MCF 10A (cell line): ENCODE measurements at regions of chr2 and their contacts with region 1.

Region 1: DNA sequence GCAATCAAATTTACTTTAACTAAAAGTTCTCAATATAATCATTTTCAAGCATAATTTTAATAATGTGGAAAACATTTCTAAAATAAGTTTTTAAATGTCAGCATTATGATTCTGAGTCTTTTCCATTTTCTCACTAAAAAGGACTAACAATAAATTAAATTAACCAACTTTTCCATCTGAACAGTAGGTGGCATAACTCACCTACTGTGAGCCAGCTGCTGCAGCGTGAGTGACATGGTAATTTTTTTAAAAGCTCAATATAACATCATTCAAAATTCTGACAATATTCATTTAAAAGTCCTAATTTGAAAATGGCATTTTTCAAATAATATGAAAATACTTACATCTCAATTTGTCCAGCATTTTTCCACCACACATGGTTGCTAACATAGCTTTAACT is 66.5 kb downstream of the DTNB start:
- DNase-seq: peak; percentile 57
- H3K4me3 Mint-ChIP-seq: no peak overlapping the region
- H3K27ac Mint-ChIP-seq: no peak overlapping the region
- H3K4me1 Mint-ChIP-seq: no peaks in the 10 kb centered on the region
- H3K27me3 Mint-ChIP-seq: no peaks in the 10 kb centered on the region
- CTCF ChIP-seq: peak; percentile 71

Region 2: DNA sequence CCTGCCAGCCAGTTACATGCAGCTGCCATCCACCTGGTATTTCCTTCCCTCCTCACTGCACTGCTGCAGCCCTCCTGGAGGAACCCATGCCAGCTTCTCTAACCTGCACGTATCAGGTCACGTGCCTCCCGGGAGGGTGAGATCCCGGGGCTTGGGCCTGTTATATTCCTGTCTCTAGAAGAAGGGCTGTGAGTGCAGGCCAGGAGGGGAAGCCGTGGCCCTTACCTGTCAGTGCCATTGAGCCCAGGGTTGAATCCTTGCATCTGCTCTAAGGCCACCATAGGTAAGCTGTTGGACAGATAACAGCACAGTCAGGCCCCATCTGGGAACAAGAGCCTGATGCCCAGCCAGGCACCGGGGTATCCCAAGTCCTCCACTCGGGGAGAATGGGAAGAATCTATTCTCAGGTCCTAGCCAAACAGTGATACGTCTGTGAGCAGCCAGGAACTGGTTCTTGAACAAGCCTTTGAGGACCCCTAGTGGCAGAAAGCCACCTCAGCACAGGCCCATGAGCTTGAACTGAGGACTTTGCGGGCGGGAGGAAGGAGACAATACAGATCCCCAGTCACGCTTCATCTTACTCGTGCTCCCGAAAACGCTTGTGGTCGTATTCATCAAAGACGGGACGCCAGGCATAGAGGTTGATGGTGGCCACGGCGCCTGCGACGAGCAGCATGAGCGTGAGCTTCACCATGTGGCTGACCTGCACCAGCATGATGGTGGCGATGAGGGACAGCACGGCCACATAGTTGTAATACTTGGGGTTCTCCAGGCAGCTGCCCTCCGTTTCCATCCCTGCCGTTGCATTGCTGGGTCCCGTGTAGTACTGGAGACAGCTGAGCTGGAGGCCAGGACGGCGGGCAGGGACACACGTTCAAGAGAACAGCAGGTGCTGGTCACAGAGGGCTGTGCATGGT is 779.3 kb before region 1 on chr2:
- CTCF ChIA-PET with region 1: no interaction called
- POLR2A ChIA-PET with region 1: no interaction called
- intact Hi-C with region 1: no loop called
- DNase-seq: peak; percentile 73
- H3K4me3 Mint-ChIP-seq: no peak overlapping the region
- H3K27ac Mint-ChIP-seq: no peak overlapping the region
- H3K4me1 Mint-ChIP-seq: no peaks in the 10 kb centered on the region
- H3K27me3 Mint-ChIP-seq: no peaks in the 10 kb centered on the region
- CTCF ChIP-seq: peak; percentile 58

Region 3: GRCh38 chr2:25056098-25056821 is 550.6 kb before region 1 on chr2:
- CTCF ChIA-PET with region 1: no interaction called
- POLR2A ChIA-PET with region 1: no interaction called
- intact Hi-C with region 1: no loop called
- DNase-seq: no peak
- H3K4me3 Mint-ChIP-seq: no peak overlapping the region
- H3K27ac Mint-ChIP-seq: no peak overlapping the region
- H3K4me1 Mint-ChIP-seq: no peaks in the 10 kb centered on the region
- H3K27me3 Mint-ChIP-seq: peaks cover 42% of the 10 kb centered on the region
- CTCF ChIP-seq: no peak

Region 4: GRCh38 chr2:25618642-25619037 is 11.7 kb after region 1 on chr2:
- CTCF ChIA-PET with region 1: interaction called, 26 read pairs
- POLR2A ChIA-PET with region 1: interaction called, 42 read pairs
- intact Hi-C with region 1: no loop called
- DNase-seq: peak; percentile 87
- H3K4me3 Mint-ChIP-seq: peak overlapping the region; percentile 61
- H3K27ac Mint-ChIP-seq: peak overlapping the region; percentile 85
- H3K4me1 Mint-ChIP-seq: peaks cover 42% of the 10 kb centered on the region
- H3K27me3 Mint-ChIP-seq: no peaks in the 10 kb centered on the region
- CTCF ChIP-seq: no peak

Region 5: GRCh38 chr2:25673300-25674076 is 66.6 kb after region 1 on chr2 and contains the start of gene DTNB:
- CTCF ChIA-PET with region 1: interaction called, 7 read pairs
- POLR2A ChIA-PET with region 1: interaction called, 20 read pairs
- intact Hi-C with region 1: loop called (anchors 2 kb)
- DNase-seq: peak; percentile 80
- H3K4me3 Mint-ChIP-seq: peak within 1 kb of the TSS; percentile 72
- H3K27ac Mint-ChIP-seq: no peak within 1 kb of the TSS
- H3K4me1 Mint-ChIP-seq: peaks cover 8% of the 10 kb centered on the region
- H3K27me3 Mint-ChIP-seq: no peaks in the 10 kb centered on the region
- CTCF ChIP-seq: no peak
- total RNA-seq, gene DTNB: 22.7 and 26.3 TPM in 2 replicates

Region 6: DNA sequence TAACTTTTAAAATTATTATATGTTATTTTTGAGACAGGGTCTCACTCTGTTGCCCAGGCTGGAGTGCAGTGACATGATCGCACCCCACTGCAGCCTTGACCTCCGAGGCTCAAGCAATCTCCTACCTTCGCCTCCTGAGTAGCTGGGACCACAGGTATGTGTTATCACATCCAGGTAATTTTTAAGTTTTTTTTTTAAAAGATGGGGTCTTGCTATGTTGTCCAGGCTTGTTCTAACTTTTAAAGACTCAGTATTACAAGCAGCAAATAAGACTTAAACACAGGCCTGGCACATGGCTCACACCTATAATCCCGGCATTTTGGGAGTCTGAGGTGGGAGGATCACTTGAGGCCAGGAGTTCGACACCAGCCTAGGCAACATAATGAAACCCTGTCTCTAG is 170.2 kb after region 1 on chr2:
- CTCF ChIA-PET with region 1: no interaction called
- POLR2A ChIA-PET with region 1: no interaction called
- intact Hi-C with region 1: no loop called
- DNase-seq: no peak
- H3K4me3 Mint-ChIP-seq: no peak overlapping the region
- H3K27ac Mint-ChIP-seq: no peak overlapping the region
- H3K4me1 Mint-ChIP-seq: no peaks in the 10 kb centered on the region
- H3K27me3 Mint-ChIP-seq: no peaks in the 10 kb centered on the region
- CTCF ChIP-seq: no peak

Region 7: DNA sequence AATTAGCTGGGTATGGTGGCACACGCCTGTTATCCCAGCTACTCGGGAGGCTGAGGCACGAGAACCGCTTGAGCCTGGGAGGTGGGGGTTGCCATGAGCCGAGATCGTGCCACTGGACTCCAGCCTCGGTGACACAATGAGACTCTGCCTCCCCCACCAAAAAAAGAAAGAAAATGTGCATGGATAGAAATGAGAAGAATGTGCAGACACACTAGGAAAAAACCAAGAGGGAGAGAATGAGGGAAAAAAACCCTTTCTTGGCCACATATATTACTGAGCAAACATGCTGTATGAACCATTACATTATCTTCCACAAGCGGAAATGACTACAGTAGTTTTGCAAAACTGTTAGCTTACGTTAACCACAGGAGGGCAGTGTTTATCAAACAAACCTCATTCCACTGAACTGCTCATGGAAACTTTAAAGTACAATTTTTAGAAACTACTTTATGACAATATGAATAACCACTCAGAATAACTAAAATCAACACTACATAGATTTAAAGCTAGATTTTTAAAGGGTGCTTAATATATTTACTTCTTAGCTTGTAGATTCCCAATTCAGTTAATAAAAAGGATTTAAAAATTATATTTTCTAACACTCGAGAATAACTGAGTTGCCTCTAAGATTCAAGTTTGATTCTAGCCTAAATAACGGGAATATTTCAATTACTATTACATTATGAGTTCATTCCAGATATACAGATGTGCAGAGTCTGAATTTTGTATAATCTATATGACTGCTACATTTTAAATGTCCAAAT is 245.0 kb after region 1 on chr2:
- CTCF ChIA-PET with region 1: interaction called, 15 read pairs
- POLR2A ChIA-PET with region 1: no interaction called
- intact Hi-C with region 1: loop called (anchors 1 kb)
- DNase-seq: peak; percentile 73
- H3K4me3 Mint-ChIP-seq: no peak overlapping the region
- H3K27ac Mint-ChIP-seq: no peak overlapping the region
- H3K4me1 Mint-ChIP-seq: peaks cover 20% of the 10 kb centered on the region
- H3K27me3 Mint-ChIP-seq: no peaks in the 10 kb centered on the region
- CTCF ChIP-seq: peak; percentile 68

Region 8: DNA sequence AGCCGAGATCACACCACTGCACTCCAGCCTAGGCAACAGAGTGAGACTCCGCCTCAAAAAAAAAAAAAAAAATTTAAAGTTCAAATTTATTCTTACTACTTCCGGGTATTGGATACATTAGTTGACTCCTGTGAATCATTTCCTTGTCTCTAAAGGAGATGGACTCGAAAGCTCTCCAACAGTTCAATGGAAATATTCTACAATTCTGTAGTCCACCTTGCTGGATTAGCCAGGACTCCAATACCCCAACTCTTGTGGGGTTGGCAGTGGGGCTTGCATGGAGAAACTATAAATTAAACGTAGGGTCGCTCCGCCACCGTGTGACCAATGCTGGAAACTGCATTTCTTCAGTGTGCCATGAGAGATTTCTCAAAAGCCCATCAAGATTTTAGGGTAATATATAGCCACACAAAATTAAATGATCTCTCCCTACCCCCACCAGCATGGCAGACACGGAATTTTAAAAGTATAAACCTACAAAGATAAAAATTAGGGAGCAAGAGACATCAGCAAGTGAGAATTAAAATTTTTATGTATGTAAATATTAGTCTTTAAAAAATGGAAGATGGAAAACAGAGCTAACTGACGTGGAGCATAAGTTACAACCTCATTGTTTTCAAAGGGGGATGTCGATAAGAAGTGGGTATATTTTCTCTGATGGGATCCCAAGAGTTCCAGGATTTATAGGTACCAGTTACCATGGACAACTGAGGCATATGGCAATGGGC is 538.2 kb after region 1 on chr2:
- CTCF ChIA-PET with region 1: interaction called, 3 read pairs
- POLR2A ChIA-PET with region 1: no interaction called
- intact Hi-C with region 1: loop called (anchors 5 kb)
- DNase-seq: peak; percentile 74
- H3K4me3 Mint-ChIP-seq: no peak overlapping the region
- H3K27ac Mint-ChIP-seq: peak overlapping the region; percentile 72
- H3K4me1 Mint-ChIP-seq: peaks cover 6% of the 10 kb centered on the region
- H3K27me3 Mint-ChIP-seq: peaks cover 6% of the 10 kb centered on the region
- CTCF ChIP-seq: peak; percentile 84